ENCODE measurements at regions of chr14 and their contacts with region 1.

Region 1: GRCh38 chr14:77097700-77098528 is at the start of gene CIPC:
- DNase-seq: peak; percentile 98 to 99 (median 99)
- H3K4me3 ChIP-seq: peak within 1 kb of the TSS; percentile 81 to 90
- H3K4me3 Mint-ChIP-seq: peak within 1 kb of the TSS; percentile 85 to 95 (median 91)
- H3K27ac ChIP-seq: peak within 1 kb of the TSS; percentile 95
- H3K27ac Mint-ChIP-seq: peak within 1 kb of the TSS; percentile 94 to 99 (median 98)
- H3K4me1 ChIP-seq: peaks cover 31% of the 10 kb centered on the region
- H3K4me1 Mint-ChIP-seq: peaks cover 25 to 48% (median 36%) of the 10 kb centered on the region in 4 donors
- H3K27me3 ChIP-seq: no peaks in the 10 kb centered on the region
- H3K27me3 Mint-ChIP-seq: no peaks in the 10 kb centered on the region
- total RNA-seq, gene CIPC: 18.6 to 21.5 TPM

Region 2: GRCh38 chr14:75982266-75983018 is 1115.5 kb before region 1 on chr14:
- CTCF ChIA-PET with region 1: no interaction called
- POLR2A ChIA-PET with region 1: no interaction called
- intact Hi-C with region 1: loop called (anchors 10 kb)
- DNase-seq: peak; percentile 79 to 82 (median 80)
- H3K4me3 ChIP-seq: peak overlapping the region; percentile 29 to 72
- H3K4me3 Mint-ChIP-seq: peak overlapping the region; percentile 78 to 93 (median 89)
- H3K27ac ChIP-seq: peak overlapping the region; percentile 71
- H3K27ac Mint-ChIP-seq: peak overlapping the region; percentile 78 to 95 (median 93)
- H3K4me1 ChIP-seq: peaks cover 44% of the 10 kb centered on the region
- H3K4me1 Mint-ChIP-seq: peaks cover 27 to 68% (median 50%) of the 10 kb centered on the region in 4 donors
- H3K27me3 ChIP-seq: no peaks in the 10 kb centered on the region
- H3K27me3 Mint-ChIP-seq: no peaks in the 10 kb centered on the region

Region 3: DNA sequence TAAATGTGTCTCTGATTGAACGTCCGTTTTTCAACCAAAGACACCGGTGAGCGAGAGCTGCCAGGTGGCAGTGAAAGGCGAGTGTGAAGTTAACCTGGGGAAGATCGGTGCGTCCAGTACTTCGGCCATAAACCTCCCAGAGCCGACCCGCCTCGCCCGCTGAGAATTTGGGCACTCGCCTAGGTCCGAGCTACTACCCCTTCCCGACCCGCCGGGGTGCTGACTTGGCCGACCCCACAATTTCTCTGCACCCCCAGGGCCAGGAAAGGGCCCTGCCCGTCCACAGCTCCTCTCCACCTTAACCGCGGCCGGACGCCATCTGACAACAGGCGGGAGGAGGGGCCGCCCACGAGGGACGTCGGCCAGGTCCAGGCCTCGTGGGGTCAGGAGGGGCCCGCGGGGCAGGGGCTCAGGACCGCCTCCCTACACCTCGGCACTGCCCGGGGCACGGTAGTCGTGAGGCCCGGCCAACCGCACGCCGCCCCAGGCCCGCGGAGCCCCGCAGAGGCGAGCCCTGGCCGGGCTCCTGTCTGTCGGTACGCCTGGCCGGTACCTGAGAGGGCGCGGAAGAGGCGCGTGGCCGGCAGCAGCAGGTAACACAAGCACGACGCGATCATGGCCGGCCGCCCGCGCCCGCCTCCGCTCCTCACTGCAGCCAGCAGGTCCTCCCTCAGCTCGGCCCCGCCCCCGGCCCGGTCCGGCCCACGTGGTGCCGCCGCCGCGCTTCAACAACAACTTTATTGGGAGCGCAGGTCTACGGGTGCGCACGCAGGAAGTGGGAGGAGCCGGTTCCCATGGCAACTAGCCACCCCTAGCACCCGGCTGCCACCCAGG is 285.5 kb before region 1 on chr14 and contains the start of gene ANGEL1:
- CTCF ChIA-PET with region 1: no interaction called
- POLR2A ChIA-PET with region 1: interaction called, 7 read pairs
- intact Hi-C with region 1: loop called (anchors 1 kb)
- DNase-seq: peak; percentile 94 to 97 (median 96)
- H3K4me3 ChIP-seq: peak within 1 kb of the TSS; percentile 43 to 78
- H3K4me3 Mint-ChIP-seq: peak within 1 kb of the TSS; percentile 87 to 98 (median 94)
- H3K27ac ChIP-seq: peak within 1 kb of the TSS; percentile 76
- H3K27ac Mint-ChIP-seq: peak within 1 kb of the TSS; percentile 93 to 98 (median 95)
- H3K4me1 ChIP-seq: peaks cover 24% of the 10 kb centered on the region
- H3K4me1 Mint-ChIP-seq: peaks cover 21 to 37% (median 28%) of the 10 kb centered on the region in 4 donors
- H3K27me3 ChIP-seq: no peaks in the 10 kb centered on the region
- H3K27me3 Mint-ChIP-seq: peaks cover 0 to 2% of the 10 kb centered on the region in 2 donors
- total RNA-seq, gene ANGEL1: 26.1 to 28.0 TPM

Region 4: DNA sequence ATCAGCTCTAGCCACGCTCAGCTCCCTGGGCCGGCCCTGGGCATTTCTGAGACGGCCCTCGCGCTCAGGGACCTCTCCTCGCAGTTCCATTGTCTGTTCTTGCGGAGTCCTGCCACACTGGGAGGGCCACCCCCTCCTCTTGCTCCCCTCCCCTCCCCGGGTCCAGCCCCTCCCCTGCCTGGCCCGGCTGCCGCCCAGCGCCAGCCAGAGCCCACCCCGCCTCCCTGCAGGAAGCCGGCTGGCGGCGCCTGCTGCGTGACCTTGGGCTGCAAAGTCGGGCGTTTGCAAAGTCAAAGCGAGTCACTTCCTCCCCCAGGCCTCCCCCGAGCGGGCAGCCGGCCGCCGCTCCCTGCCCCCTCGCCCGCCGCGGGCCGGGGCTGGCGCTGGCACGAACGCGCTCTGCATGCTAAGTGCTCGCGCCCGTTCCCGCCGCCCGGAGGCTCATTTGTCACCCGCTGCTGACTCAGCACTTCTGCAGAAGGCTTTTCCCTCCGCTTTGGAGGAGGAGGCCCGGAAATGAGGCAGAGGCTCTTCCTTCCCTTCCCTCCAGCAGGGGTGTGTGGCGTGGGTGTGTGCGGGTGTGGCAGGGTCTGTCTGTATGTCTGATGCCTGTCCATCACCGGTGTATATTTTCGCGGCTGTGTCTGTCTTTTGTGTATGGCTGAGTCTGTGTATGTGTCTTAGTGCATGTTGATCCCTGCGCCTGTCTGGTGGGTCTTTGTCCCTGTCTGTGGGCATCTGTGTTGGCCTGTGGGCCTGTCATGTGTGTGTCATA is 141.4 kb before region 1 on chr14:
- CTCF ChIA-PET with region 1: interaction called, 3 read pairs
- POLR2A ChIA-PET with region 1: interaction called, 5 read pairs
- intact Hi-C with region 1: loop called (anchors 2 kb)
- DNase-seq: peak; percentile 83 to 97 (median 85)
- H3K4me3 ChIP-seq: peak overlapping the region; percentile 61 to 64
- H3K4me3 Mint-ChIP-seq: peak overlapping the region; percentile 81 to 96 (median 88)
- H3K27ac ChIP-seq: peak overlapping the region; percentile 94
- H3K27ac Mint-ChIP-seq: peak overlapping the region; percentile 87 to 99 (median 98)
- H3K4me1 ChIP-seq: peaks cover 72% of the 10 kb centered on the region
- H3K4me1 Mint-ChIP-seq: peaks cover 37 to 75% (median 53%) of the 10 kb centered on the region in 4 donors
- H3K27me3 ChIP-seq: no peaks in the 10 kb centered on the region
- H3K27me3 Mint-ChIP-seq: no peaks in the 10 kb centered on the region

Region 5: DNA sequence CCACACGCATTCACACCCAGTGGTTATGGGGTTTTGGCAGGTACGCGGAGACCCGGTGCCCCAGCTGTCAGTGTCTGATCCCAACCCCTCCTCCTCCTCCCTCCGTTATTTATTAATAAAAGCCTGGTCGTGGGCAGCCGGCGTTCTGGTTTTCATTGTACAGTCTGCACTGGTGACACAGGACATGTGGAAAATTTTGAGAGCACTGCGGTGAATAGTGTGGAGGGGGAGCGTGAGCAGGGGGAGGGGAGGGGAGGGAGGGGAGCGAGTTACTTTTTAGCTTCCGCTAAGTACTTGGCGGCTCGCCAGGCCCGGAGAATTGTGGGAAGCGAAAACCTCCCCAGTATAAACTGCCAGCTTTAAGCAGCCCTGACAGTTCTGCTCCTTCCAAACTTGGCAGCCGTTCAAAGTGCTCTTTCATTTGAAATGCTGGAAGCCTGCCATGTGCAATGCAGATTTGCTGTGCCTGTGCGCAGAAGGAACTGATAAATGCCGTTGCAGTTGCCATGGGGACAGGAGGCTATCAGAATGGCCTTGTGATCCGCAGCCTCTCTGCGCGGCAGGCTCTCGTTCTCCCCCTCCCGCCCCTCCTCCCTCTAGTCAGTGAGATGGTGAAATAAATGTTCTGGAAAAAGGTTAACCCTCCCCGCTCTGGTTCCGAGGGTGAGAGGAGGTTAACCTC is 57.7 kb before region 1 on chr14:
- CTCF ChIA-PET with region 1: interaction called, 3 read pairs
- POLR2A ChIA-PET with region 1: interaction called, 6 read pairs
- intact Hi-C with region 1: loop called (anchors 1 kb)
- DNase-seq: peak; percentile 96 to 99 (median 99)
- H3K4me3 ChIP-seq: peak overlapping the region; percentile 8 to 53
- H3K4me3 Mint-ChIP-seq: peak overlapping the region; percentile 84 to 93 (median 86)
- H3K27ac ChIP-seq: peak overlapping the region; percentile 95
- H3K27ac Mint-ChIP-seq: peak overlapping the region; percentile 97 to 100 (median 99)
- H3K4me1 ChIP-seq: peaks cover 94% of the 10 kb centered on the region
- H3K4me1 Mint-ChIP-seq: peaks cover 50 to 97% (median 84%) of the 10 kb centered on the region in 4 donors
- H3K27me3 ChIP-seq: no peaks in the 10 kb centered on the region
- H3K27me3 Mint-ChIP-seq: no peaks in the 10 kb centered on the region

Region 6: DNA sequence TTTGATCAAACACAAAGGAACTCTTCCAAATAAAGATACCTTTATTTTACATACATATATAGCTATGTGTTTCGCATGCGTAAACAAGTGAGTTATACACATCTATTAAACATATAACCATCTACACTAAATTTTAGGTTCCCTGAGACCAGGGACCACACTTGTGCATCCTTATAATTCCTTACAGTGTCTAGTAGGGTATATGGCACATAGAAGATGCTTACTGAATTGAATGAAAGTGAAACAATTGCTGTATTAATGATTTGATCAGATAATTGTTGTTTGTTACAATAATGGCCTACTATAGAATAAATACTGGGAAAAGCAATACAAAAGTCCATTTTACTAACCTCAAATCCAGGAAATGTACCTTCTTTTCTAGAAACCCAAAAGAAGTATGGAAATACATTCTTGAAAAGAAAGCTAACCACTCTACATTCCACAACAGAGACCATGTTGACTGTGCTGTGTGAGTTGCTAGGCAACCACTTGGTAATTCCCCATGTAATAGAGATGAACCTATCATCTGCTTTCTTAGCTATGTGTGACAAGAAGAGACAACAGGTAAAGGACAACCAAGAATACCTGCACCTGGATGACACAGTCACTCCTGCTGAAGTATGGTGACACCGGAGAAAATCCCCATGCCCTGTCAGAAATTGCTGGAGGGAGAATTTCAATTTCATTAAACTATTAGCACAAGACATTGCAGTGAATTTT is 11.7 kb before region 1 on chr14:
- CTCF ChIA-PET with region 1: interaction called, 12 read pairs
- POLR2A ChIA-PET with region 1: no interaction called
- intact Hi-C with region 1: no loop called
- DNase-seq: peak in 4 of 5 donors; percentile 41 to 59 (median 48)
- H3K4me3 ChIP-seq: no peak overlapping the region
- H3K4me3 Mint-ChIP-seq: peak overlapping the region in 1 of 8 donors; percentile 33
- H3K27ac ChIP-seq: no peak overlapping the region
- H3K27ac Mint-ChIP-seq: peak overlapping the region in 5 of 7 donors; percentile 68 to 97 (median 90)
- H3K4me1 ChIP-seq: peaks cover 17% of the 10 kb centered on the region
- H3K4me1 Mint-ChIP-seq: peaks cover 4 to 19% (median 8%) of the 10 kb centered on the region in 4 donors
- H3K27me3 ChIP-seq: no peaks in the 10 kb centered on the region
- H3K27me3 Mint-ChIP-seq: peaks cover 2 to 9% of the 10 kb centered on the region in 2 donors

Region 7: GRCh38 chr14:77314043-77314442 is 216.1 kb after region 1 on chr14:
- CTCF ChIA-PET with region 1: interaction called, 10 read pairs
- POLR2A ChIA-PET with region 1: interaction called, 3 read pairs
- intact Hi-C with region 1: no loop called
- DNase-seq: no peak
- H3K4me3 ChIP-seq: no peak overlapping the region
- H3K4me3 Mint-ChIP-seq: no peak overlapping the region
- H3K27ac ChIP-seq: no peak overlapping the region
- H3K27ac Mint-ChIP-seq: no peak overlapping the region
- H3K4me1 ChIP-seq: no peaks in the 10 kb centered on the region
- H3K4me1 Mint-ChIP-seq: no peaks in the 10 kb centered on the region
- H3K27me3 ChIP-seq: no peaks in the 10 kb centered on the region
- H3K27me3 Mint-ChIP-seq: no peaks in the 10 kb centered on the region